Activated B cell treated with CpG ODN at 0.5 μM for 24 hours (primary cell): ENCODE measurements at regions of chr19 and their contacts with region 1.

Region 1: GRCh38 chr19:21698215-21698614 is 69.2 kb downstream of the ZNF100 start:
- DNase-seq: no peak
- ATAC-seq: no peak
- H3K4me3 Mint-ChIP-seq: no peak overlapping the region
- H3K27ac Mint-ChIP-seq: no peak overlapping the region
- H3K4me1 Mint-ChIP-seq: no peaks in the 10 kb centered on the region
- H3K27me3 Mint-ChIP-seq: no peaks in the 10 kb centered on the region
- CTCF ChIP-seq: no peak

Region 2: DNA sequence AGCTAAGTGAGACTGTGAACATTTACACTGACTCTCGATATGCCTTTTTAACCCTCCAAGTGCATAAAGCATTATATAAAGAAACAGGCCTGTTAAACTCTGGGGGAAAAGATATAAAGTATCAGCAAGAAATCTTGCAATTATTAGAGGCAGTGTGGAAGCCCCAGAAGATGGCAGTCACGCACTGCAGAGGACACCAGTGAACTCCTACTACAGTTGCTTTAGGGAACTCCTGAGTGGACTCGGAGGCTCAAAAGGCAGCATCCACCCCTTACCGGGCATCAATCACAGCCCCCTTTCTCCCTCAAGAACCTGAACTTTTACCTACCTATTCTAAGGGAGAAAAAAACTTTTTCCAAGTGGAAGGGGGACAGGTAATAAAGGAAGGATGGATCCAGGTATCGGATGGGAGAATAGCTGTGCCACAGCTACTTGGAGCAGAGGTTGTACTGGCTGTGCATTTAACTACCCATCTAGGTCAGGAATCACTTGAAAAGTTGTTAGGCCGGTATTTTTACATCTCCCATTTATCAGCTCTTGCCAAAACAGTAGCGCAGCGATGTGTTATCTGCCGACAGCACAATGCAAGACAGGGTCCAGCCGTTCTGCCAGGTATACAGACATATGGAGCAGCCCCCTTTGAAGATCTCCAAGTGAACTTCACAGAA is 1451.1 kb before region 1 on chr19:
- CTCF ChIA-PET with region 1: no interaction called
- POLR2A ChIA-PET with region 1: no interaction called
- intact Hi-C with region 1: loop called (anchors 5 kb)
- DNase-seq: no peak
- ATAC-seq: no peak
- H3K4me3 Mint-ChIP-seq: no peak overlapping the region
- H3K27ac Mint-ChIP-seq: no peak overlapping the region
- H3K4me1 Mint-ChIP-seq: peaks cover 17% of the 10 kb centered on the region
- H3K27me3 Mint-ChIP-seq: no peaks in the 10 kb centered on the region
- CTCF ChIP-seq: no peak

Region 3: GRCh38 chr19:21202865-21203494 is 495.2 kb before region 1 on chr19:
- CTCF ChIA-PET with region 1: interaction called, 4 read pairs
- POLR2A ChIA-PET with region 1: no interaction called
- intact Hi-C with region 1: loop called (anchors 1 kb)
- DNase-seq: no peak
- ATAC-seq: peak; percentile 28
- H3K4me3 Mint-ChIP-seq: no peak overlapping the region
- H3K27ac Mint-ChIP-seq: no peak overlapping the region
- H3K4me1 Mint-ChIP-seq: no peaks in the 10 kb centered on the region
- H3K27me3 Mint-ChIP-seq: no peaks in the 10 kb centered on the region
- CTCF ChIP-seq: no peak

Region 4: GRCh38 chr19:21482863-21483276 is 215.3 kb before region 1 on chr19:
- CTCF ChIA-PET with region 1: interaction called, 4 read pairs
- POLR2A ChIA-PET with region 1: no interaction called
- intact Hi-C with region 1: loop called (anchors 2 kb)
- DNase-seq: peak; percentile 41
- ATAC-seq: peak; percentile 82
- H3K4me3 Mint-ChIP-seq: no peak overlapping the region
- H3K27ac Mint-ChIP-seq: no peak overlapping the region
- H3K4me1 Mint-ChIP-seq: no peaks in the 10 kb centered on the region
- H3K27me3 Mint-ChIP-seq: no peaks in the 10 kb centered on the region
- CTCF ChIP-seq: peak; percentile 37